A673 (cell line): ENCODE measurements at regions of chr5 and their contacts with region 1.

Region 1: GRCh38 chr5:141094481-141095262 is at the start of gene PCDHB2:
- DNase-seq: peak; percentile 94
- H3K4me3 ChIP-seq: peak within 1 kb of the TSS; percentile 73
- H3K27ac ChIP-seq: peak within 1 kb of the TSS; percentile 85
- H3K4me1 ChIP-seq: peaks cover 4% of the 10 kb centered on the region
- H3K27me3 ChIP-seq: no peaks in the 10 kb centered on the region
- CTCF ChIP-seq: peak; percentile 87
- total RNA-seq, gene PCDHB2: 31.3 and 35.0 TPM in 2 replicates

Region 2: GRCh38 chr5:140420226-140420570 is 674.5 kb before region 1 on chr5:
- CTCF ChIA-PET with region 1: no interaction called
- POLR2A ChIA-PET with region 1: no interaction called
- intact Hi-C with region 1: no loop called
- DNase-seq: no peak
- H3K4me3 ChIP-seq: no peak overlapping the region
- H3K27ac ChIP-seq: no peak overlapping the region
- H3K4me1 ChIP-seq: peaks cover 4% of the 10 kb centered on the region
- H3K27me3 ChIP-seq: no peaks in the 10 kb centered on the region
- CTCF ChIP-seq: no peak

Region 3: DNA sequence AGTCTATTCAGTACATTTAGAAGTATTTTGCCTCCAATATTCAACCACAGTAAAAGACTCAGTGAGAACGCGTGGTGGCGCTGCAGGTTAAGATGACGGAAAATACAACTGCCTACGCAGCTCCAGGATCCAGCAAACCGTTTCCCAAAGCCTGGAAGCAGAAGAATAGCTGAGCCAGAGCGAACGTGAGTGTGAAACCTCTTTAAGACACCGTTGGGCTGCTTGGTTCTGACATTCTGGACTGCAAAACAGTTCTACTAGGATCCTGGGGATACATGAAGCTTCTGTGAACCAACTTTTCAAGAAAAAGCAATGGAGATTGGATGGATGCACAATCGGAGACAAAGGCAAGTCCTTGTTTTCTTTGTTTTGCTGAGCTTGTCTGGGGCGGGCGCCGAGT is 87.6 kb after region 1 on chr5 and contains the start of gene PCDHB16:
- CTCF ChIA-PET with region 1: interaction called, 7 read pairs
- POLR2A ChIA-PET with region 1: no interaction called
- intact Hi-C with region 1: loop called (anchors 5 kb)
- DNase-seq: peak; percentile 90
- H3K4me3 ChIP-seq: peak within 1 kb of the TSS; percentile 51
- H3K27ac ChIP-seq: peak within 1 kb of the TSS; percentile 75
- H3K4me1 ChIP-seq: no peaks in the 10 kb centered on the region
- H3K27me3 ChIP-seq: no peaks in the 10 kb centered on the region
- CTCF ChIP-seq: peak; percentile 87
- total RNA-seq, gene PCDHB16: 11.3 and 12.8 TPM in 2 replicates

Region 4: GRCh38 chr5:141313711-141314110 is 219.0 kb after region 1 on chr5:
- CTCF ChIA-PET with region 1: no interaction called
- POLR2A ChIA-PET with region 1: no interaction called
- intact Hi-C with region 1: no loop called
- DNase-seq: no peak
- H3K4me3 ChIP-seq: no peak overlapping the region
- H3K27ac ChIP-seq: no peak overlapping the region
- H3K4me1 ChIP-seq: no peaks in the 10 kb centered on the region
- H3K27me3 ChIP-seq: no peaks in the 10 kb centered on the region
- CTCF ChIP-seq: no peak